Dendritic cell treated with granulocyte-macrophage colony-stimulating factor and Interleukin-4, amounts not matched to agents 40 ng/mL and 50 ng/mL, for 4 days (primary cell): ENCODE measurements at regions of chr3 and their contacts with region 1.

Region 1: GRCh38 chr3:160754855-160755747 is 930 bp upstream of the PPM1L start:
- H3K4me3 Mint-ChIP-seq: peak overlapping the region; percentile 93
- H3K27ac Mint-ChIP-seq: peak overlapping the region; percentile 97
- H3K4me1 Mint-ChIP-seq: peaks cover 32% of the 10 kb centered on the region
- H3K27me3 Mint-ChIP-seq: peaks cover 2% of the 10 kb centered on the region

Region 2: DNA sequence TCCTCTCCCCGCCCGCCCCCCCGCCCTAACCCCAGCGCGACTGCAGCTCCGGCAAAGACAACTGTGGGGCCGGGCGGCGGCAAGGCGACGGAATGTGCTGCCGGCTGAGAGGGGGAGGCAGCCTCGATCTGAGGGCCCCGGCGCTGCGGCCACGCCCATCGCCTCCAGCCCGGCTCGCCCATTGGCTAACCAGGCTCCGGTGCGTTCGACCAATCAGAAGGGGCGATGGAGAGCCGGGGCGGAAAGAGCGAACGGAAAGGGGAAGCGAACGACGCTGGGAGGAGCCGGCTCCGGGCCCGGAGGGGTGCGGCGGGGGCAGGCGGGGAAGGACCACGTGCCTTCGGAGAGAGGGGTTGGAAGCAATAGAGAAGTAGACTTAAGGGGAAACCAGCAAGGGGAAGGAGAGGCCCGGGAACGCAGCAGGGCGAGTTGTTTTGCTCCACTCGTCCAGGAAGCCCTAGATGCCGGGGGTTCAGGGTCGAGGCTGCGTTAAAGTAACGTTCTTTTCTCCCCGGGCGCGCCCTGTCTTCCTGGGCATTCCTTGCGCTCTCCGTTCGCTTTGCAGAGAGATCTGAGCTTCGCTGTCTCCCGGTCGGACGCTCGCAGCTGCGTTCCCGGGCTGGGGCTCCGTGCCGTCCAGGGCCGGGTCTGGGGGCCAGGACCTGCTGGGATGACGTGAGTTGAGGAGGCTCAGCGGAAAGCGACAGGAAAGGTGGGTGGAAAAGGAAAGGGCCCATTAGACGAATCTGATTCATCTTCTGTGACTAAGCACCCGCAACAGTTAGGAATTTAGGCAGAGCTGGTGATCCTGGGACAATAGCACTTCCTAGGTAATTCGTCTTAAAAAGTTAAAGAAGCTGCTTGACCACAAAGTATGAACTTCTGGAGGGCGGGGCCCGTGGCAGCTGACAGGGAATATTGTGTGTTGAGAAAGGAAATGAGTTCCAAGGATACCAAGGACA is 189.4 kb before region 1 on chr3 and contains the start of gene KPNA4:
- intact Hi-C with region 1: loop called (anchors 2 kb)
- H3K4me3 Mint-ChIP-seq: peak within 1 kb of the TSS; percentile 95
- H3K27ac Mint-ChIP-seq: peak within 1 kb of the TSS; percentile 100
- H3K4me1 Mint-ChIP-seq: peaks cover 57% of the 10 kb centered on the region
- H3K27me3 Mint-ChIP-seq: no peaks in the 10 kb centered on the region

Region 3: GRCh38 chr3:160801386-160802118 is 46.5 kb after region 1 on chr3:
- intact Hi-C with region 1: loop called (anchors 5 kb)
- H3K4me3 Mint-ChIP-seq: peak overlapping the region; percentile 75
- H3K27ac Mint-ChIP-seq: peak overlapping the region; percentile 92
- H3K4me1 Mint-ChIP-seq: peaks cover 65% of the 10 kb centered on the region
- H3K27me3 Mint-ChIP-seq: peaks cover under 1% of the 10 kb centered on the region

Region 4: DNA sequence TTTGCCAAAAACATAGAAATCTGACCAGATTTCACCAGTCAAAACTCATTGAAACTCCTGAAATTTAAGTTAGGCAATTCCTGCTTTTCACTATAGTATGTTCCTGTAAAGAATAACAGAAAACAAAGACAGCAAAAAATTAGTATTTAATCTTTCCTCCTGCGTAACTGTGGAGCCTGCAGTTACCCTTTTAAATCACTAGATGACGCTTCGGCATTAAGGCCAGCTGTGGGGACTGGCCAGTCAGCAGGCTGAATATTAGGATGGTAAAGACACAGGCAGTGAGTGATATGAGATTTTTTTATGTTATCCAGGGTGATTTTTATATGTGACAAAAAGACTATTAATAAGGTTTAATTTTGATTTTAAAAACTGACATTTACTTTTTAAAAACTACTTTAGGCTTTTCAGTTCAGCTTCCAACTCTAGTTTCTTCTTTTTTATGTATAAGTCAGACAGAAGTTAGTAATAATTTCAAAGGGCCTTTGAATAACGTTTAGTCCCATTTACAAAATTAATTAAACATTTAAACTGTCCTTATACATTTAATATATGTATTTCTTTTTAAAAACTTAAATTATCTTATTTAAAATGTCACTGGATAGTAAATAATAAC is 166.0 kb after region 1 on chr3:
- intact Hi-C with region 1: loop called (anchors 10 kb)
- H3K4me3 Mint-ChIP-seq: no peak overlapping the region
- H3K27ac Mint-ChIP-seq: no peak overlapping the region
- H3K4me1 Mint-ChIP-seq: peaks cover 9% of the 10 kb centered on the region
- H3K27me3 Mint-ChIP-seq: no peaks in the 10 kb centered on the region

Region 5: GRCh38 chr3:161035711-161036110 is 280.6 kb after region 1 on chr3:
- intact Hi-C with region 1: loop called (anchors 1 kb)
- H3K4me3 Mint-ChIP-seq: no peak overlapping the region
- H3K27ac Mint-ChIP-seq: peak overlapping the region; percentile 80
- H3K4me1 Mint-ChIP-seq: peaks cover 56% of the 10 kb centered on the region
- H3K27me3 Mint-ChIP-seq: no peaks in the 10 kb centered on the region